ENCODE measurements at regions of chr2 and their contacts with region 1.

Region 1: DNA sequence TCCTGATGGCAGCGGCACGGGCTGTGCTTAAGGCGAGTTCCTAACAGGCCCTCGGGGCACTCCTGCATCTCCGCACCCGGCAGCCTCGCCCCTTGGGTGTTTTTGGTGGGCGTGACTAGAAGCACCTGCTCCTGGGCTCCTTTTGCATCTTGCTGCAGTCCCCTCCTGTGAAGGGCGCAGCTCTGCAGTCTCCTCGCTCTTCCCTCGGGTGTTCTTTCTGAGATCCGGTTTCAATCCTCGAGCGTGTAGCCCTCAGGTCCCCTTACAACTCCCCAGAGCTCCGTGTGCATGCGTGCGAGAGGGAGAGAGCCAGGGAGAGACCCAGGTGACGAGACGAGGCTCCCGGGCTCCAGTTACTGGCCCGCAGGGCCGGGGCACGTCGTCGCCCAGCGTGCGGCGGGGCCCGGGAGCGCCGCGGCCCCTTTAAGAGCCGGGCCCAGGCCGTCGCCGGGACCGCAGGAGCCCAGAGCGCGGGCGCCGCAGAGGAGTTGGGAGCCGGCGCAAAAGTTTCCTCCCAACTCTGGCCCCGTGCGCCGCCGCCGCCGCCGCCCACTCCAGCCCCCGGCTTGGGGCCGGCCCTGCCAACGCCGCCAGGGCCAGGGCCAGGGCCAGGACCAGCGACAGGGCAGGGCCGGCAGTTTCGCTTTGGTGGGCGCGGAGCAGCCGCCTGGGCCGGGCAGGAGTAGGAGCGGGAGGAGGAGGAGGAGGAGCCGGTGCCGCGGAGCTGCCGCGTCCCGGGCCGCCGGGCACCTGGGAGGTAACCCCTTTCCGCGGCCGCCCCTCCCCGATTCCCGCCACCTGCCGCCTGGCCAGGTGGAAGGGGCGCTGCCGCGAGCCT is at the start of gene PARD3B:
- DNase-seq: peak in 1 of 2 donors; percentile 70
- H3K4me3 ChIP-seq: peak within 1 kb of the TSS; percentile 99
- H3K27ac ChIP-seq: peak within 1 kb of the TSS; percentile 91
- H3K4me1 ChIP-seq: peaks cover 0 to 9% of the 10 kb centered on the region in 2 donors
- H3K27me3 ChIP-seq: no peaks in the 10 kb centered on the region
- CTCF ChIP-seq: no peak
- total RNA-seq, gene PARD3B: 9.5 TPM

Region 2: GRCh38 chr2:204452464-204453023 is 92.7 kb before region 1 on chr2:
- intact Hi-C with region 1: loop called (anchors 5 kb)
- DNase-seq: peak in 1 of 2 donors; percentile 80
- H3K4me3 ChIP-seq: no peak overlapping the region
- H3K27ac ChIP-seq: peak overlapping the region; percentile 40 to 48
- H3K4me1 ChIP-seq: peaks cover 5 to 11% of the 10 kb centered on the region in 2 donors
- H3K27me3 ChIP-seq: no peaks in the 10 kb centered on the region
- CTCF ChIP-seq: no peak

Region 3: GRCh38 chr2:204505946-204506345 is 39.3 kb before region 1 on chr2:
- intact Hi-C with region 1: no loop called
- DNase-seq: no peak
- H3K4me3 ChIP-seq: no peak overlapping the region
- H3K27ac ChIP-seq: no peak overlapping the region
- H3K4me1 ChIP-seq: no peaks in the 10 kb centered on the region
- H3K27me3 ChIP-seq: no peaks in the 10 kb centered on the region
- CTCF ChIP-seq: no peak

Region 4: GRCh38 chr2:204635478-204635877 is 90.2 kb after region 1 on chr2:
- intact Hi-C with region 1: no loop called
- DNase-seq: no peak
- H3K4me3 ChIP-seq: no peak overlapping the region
- H3K27ac ChIP-seq: no peak overlapping the region
- H3K4me1 ChIP-seq: no peaks in the 10 kb centered on the region
- H3K27me3 ChIP-seq: no peaks in the 10 kb centered on the region
- CTCF ChIP-seq: no peak